CD8-positive, alpha-beta T cell (primary cell): ENCODE measurements at regions of chr22 and their contacts with region 1.

Region 1: DNA sequence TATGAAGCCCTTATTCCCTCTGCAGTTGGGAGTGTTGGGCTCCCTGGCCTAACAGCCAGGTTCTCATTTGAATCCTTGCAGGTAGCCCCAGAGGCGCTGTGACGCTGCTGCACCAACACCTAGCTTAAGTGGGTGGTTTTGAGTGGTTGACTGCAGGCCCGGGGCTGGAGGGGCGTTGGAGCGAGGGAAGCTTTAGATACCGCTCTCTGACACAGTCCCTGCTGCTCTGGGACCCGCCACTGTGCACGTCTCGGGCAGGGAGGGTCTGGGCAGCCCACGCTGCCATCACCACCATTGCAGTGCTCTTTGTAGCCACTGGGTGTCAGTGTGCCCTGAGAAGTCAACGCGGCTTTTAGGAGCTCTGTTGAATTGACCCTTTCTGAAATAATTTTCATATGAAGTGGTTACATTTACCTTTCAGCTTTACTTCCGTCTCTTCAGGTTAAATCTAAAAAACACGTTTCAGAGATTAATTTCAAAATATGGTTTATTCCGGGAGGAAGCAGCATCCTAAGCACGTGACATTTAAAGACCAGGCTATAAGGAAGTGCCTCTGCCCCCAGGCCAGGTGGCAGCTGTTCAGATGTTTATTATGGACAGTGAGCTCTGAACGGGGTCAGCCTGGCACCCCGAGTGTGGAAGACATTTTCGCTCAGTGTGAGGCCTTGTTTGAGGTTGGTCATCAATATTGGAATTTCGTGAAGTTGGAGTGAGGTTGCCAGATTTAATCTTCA is 30.9 kb upstream of the PARVB start:
- DNase-seq: peak; percentile 30 to 79 (median 61)
- ATAC-seq: peak; percentile 72
- H3K4me3 ChIP-seq: no peak overlapping the region
- H3K4me3 Mint-ChIP-seq: no peak overlapping the region
- H3K27ac ChIP-seq: no peak overlapping the region
- H3K27ac Mint-ChIP-seq: no peak overlapping the region
- H3K4me1 ChIP-seq: peaks cover 15% of the 10 kb centered on the region
- H3K4me1 Mint-ChIP-seq: peaks cover 27% of the 10 kb centered on the region
- H3K27me3 ChIP-seq: no peaks in the 10 kb centered on the region
- H3K27me3 Mint-ChIP-seq: no peaks in the 10 kb centered on the region
- CTCF ChIP-seq: peak; percentile 95

Region 2: GRCh38 chr22:43878079-43878795 is 115.0 kb before region 1 on chr22:
- CTCF ChIA-PET with region 1: no interaction called
- POLR2A ChIA-PET with region 1: no interaction called
- intact Hi-C with region 1: no loop called
- DNase-seq: no peak
- ATAC-seq: no peak
- H3K4me3 ChIP-seq: no peak overlapping the region
- H3K4me3 Mint-ChIP-seq: no peak overlapping the region
- H3K27ac ChIP-seq: no peak overlapping the region
- H3K27ac Mint-ChIP-seq: no peak overlapping the region
- H3K4me1 ChIP-seq: no peaks in the 10 kb centered on the region
- H3K4me1 Mint-ChIP-seq: no peaks in the 10 kb centered on the region
- H3K27me3 ChIP-seq: no peaks in the 10 kb centered on the region
- H3K27me3 Mint-ChIP-seq: peaks cover 37% of the 10 kb centered on the region
- CTCF ChIP-seq: no peak

Region 3: GRCh38 chr22:43893266-43893665 is 99.9 kb before region 1 on chr22:
- CTCF ChIA-PET with region 1: no interaction called
- POLR2A ChIA-PET with region 1: no interaction called
- intact Hi-C with region 1: no loop called
- DNase-seq: no peak
- ATAC-seq: no peak
- H3K4me3 ChIP-seq: no peak overlapping the region
- H3K4me3 Mint-ChIP-seq: no peak overlapping the region
- H3K27ac ChIP-seq: no peak overlapping the region
- H3K27ac Mint-ChIP-seq: no peak overlapping the region
- H3K4me1 ChIP-seq: no peaks in the 10 kb centered on the region
- H3K4me1 Mint-ChIP-seq: peaks cover 2% of the 10 kb centered on the region
- H3K27me3 ChIP-seq: peaks cover 0 to 3% of the 10 kb centered on the region in 2 experiments
- H3K27me3 Mint-ChIP-seq: peaks cover 25% of the 10 kb centered on the region
- CTCF ChIP-seq: no peak

Region 4: GRCh38 chr22:43955040-43955882 is 37.9 kb before region 1 on chr22 and contains the start of gene SAMM50:
- CTCF ChIA-PET with region 1: interaction called, 12 read pairs
- POLR2A ChIA-PET with region 1: no interaction called
- intact Hi-C with region 1: loop called in 1 of 2 experiments (anchors 1 kb)
- DNase-seq: peak; percentile 82 to 95 (median 92)
- ATAC-seq: peak; percentile 98
- H3K4me3 ChIP-seq: peak within 1 kb of the TSS; percentile 86 to 91
- H3K4me3 Mint-ChIP-seq: peak within 1 kb of the TSS; percentile 97
- H3K27ac ChIP-seq: peak within 1 kb of the TSS; percentile 83 to 89
- H3K27ac Mint-ChIP-seq: peak within 1 kb of the TSS; percentile 93
- H3K4me1 ChIP-seq: peaks cover 22% of the 10 kb centered on the region
- H3K4me1 Mint-ChIP-seq: peaks cover 44% of the 10 kb centered on the region
- H3K27me3 ChIP-seq: no peaks in the 10 kb centered on the region
- H3K27me3 Mint-ChIP-seq: peaks cover 10% of the 10 kb centered on the region
- CTCF ChIP-seq: no peak
- total RNA-seq, gene SAMM50: 20.7 to 24.9 TPM

Region 5: GRCh38 chr22:44003405-44004103 is 10.4 kb after region 1 on chr22:
- CTCF ChIA-PET with region 1: interaction called, 12 read pairs
- POLR2A ChIA-PET with region 1: no interaction called
- intact Hi-C with region 1: no loop called
- DNase-seq: no peak
- ATAC-seq: no peak
- H3K4me3 ChIP-seq: no peak overlapping the region
- H3K4me3 Mint-ChIP-seq: no peak overlapping the region
- H3K27ac ChIP-seq: no peak overlapping the region
- H3K27ac Mint-ChIP-seq: no peak overlapping the region
- H3K4me1 ChIP-seq: no peaks in the 10 kb centered on the region
- H3K4me1 Mint-ChIP-seq: no peaks in the 10 kb centered on the region
- H3K27me3 ChIP-seq: no peaks in the 10 kb centered on the region
- H3K27me3 Mint-ChIP-seq: no peaks in the 10 kb centered on the region
- CTCF ChIP-seq: no peak

Region 6: GRCh38 chr22:44037519-44038370 is 44.6 kb after region 1 on chr22:
- CTCF ChIA-PET with region 1: interaction called, 10 read pairs
- POLR2A ChIA-PET with region 1: no interaction called
- intact Hi-C with region 1: no loop called
- DNase-seq: no peak
- ATAC-seq: no peak
- H3K4me3 ChIP-seq: no peak overlapping the region
- H3K4me3 Mint-ChIP-seq: no peak overlapping the region
- H3K27ac ChIP-seq: no peak overlapping the region
- H3K27ac Mint-ChIP-seq: no peak overlapping the region
- H3K4me1 ChIP-seq: peaks cover 5% of the 10 kb centered on the region
- H3K4me1 Mint-ChIP-seq: peaks cover 5% of the 10 kb centered on the region
- H3K27me3 ChIP-seq: no peaks in the 10 kb centered on the region
- H3K27me3 Mint-ChIP-seq: peaks cover 2% of the 10 kb centered on the region
- CTCF ChIP-seq: no peak

Region 7: DNA sequence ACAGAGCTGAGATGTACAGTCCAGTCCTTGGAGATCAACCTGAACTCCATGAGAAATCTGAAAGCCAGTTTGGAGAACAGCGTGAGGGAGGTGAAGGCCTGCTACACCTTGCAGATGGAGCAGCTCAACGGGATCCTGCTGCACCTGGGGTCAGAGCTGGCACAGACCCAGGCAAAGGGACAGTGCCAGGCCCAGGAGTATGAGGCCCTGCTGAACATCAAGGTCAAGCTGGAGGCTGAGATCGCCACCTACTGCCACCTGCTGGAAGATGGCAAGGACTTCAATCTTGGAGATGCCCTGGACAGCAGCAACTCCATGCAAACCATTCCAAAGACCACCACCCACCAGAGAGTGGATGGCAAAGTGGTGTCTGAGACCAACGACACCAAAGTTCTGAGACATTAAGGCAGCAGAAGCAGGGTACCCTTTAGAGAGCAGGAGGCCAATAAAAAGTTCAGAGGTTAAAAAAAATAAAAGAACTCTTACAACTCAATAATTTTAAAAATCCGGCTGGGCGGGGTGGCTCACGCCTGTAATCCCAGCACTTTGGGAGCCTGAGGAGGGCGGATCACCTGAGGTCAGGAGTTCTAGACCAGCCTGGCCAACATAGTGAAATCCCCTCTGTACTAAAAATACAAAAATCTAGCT is 574.8 kb after region 1 on chr22:
- CTCF ChIA-PET with region 1: interaction called, 17 read pairs
- POLR2A ChIA-PET with region 1: no interaction called
- intact Hi-C with region 1: loop called in 1 of 2 experiments (anchors 2 kb)
- DNase-seq: peak; percentile 16 to 72 (median 57)
- ATAC-seq: no peak
- H3K4me3 ChIP-seq: no peak overlapping the region
- H3K4me3 Mint-ChIP-seq: no peak overlapping the region
- H3K27ac ChIP-seq: no peak overlapping the region
- H3K27ac Mint-ChIP-seq: no peak overlapping the region
- H3K4me1 ChIP-seq: no peaks in the 10 kb centered on the region
- H3K4me1 Mint-ChIP-seq: no peaks in the 10 kb centered on the region
- H3K27me3 ChIP-seq: no peaks in the 10 kb centered on the region
- H3K27me3 Mint-ChIP-seq: peaks cover 7% of the 10 kb centered on the region
- CTCF ChIP-seq: peak; percentile 49

Region 8: DNA sequence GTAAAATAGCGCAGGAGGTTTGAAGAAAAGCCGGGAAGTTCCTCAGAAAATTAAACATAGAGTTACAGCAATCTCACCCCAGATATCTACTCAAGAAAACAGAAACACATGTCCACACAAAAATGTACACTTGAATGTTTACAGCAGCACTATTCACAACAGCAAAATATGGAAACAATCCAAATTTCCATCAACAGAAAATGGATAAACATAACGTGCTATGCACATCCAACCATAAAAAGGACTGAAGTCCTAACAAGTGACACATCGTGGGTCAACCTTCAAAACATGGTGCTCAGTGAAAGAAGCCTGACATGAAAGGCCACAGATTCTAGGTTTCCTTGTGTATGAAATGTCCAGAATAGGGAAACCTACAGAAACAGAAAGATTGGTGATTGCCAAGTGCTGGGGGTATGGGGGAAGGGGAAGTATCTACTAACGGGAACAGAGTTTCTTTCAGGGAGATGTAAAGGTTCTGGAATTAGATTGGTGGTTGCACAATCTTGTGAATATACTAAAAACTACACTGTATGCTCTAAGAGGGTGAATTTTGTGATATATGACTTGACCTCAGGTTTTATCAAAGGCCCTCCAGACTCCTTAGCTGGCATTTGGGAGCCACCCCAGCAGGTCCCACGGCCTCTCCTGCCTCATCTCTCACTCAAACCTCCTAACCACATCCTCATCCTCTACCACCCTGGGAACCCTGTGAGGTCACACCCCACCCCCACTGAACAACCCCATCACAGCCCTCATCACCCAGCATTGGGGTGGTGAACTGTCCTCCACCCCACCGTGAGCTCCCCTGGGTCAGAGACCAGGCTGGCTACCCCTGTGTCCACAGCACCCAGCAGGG is 639.6 kb after region 1 on chr22:
- CTCF ChIA-PET with region 1: interaction called, 110 read pairs
- POLR2A ChIA-PET with region 1: no interaction called
- intact Hi-C with region 1: no loop called
- DNase-seq: peak in 2 of 9 experiments; percentile 44 to 66
- ATAC-seq: peak; percentile 55
- H3K4me3 ChIP-seq: no peak overlapping the region
- H3K4me3 Mint-ChIP-seq: no peak overlapping the region
- H3K27ac ChIP-seq: peak overlapping the region in 1 of 2 experiments; percentile 29
- H3K27ac Mint-ChIP-seq: no peak overlapping the region
- H3K4me1 ChIP-seq: peaks cover 27% of the 10 kb centered on the region
- H3K4me1 Mint-ChIP-seq: peaks cover 8% of the 10 kb centered on the region
- H3K27me3 ChIP-seq: no peaks in the 10 kb centered on the region
- H3K27me3 Mint-ChIP-seq: no peaks in the 10 kb centered on the region
- CTCF ChIP-seq: no peak